Caco-2 (cell line): ENCODE measurements at regions of chr22 and their contacts with region 1.

Region 1: DNA sequence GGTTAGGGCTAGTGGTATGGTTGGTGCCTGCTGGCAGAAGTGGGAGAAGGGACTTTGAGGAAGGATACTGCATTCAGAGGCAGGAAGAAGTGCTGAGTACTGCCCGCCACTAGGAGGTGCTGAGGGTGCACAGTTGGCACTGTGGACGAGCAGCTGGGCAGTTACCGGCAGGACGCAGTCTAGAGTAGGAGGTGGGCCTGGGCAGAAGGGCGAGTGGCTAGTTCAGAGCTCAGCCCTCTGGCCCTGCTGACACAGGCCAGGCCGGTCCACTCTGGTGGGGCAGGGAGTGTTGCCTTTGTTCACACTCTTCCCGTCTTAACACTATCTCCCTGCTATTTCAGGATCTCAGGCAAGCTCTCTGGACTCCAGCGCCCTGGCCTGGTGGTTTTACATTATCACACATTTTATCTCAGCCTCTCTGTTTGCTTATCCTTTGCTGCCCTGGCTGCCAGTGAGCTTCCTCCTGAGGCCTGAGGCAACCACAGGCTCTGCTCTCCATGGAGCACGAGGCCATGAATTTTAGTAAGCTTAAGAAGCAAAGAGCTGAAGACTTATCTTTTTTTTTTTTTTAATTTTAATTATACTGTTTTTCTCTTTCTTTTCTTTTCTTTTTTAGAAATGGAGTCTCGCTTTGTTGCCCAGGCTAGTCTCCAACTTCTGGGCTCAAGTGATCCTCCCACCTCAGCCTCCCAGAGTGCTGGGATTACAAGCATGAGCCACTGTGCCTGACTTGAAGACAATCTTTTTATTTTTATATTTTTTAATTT is 26.9 kb downstream of the SNAP29 start:
- DNase-seq: peak; percentile 83 to 89
- H3K4me3 ChIP-seq: no peak overlapping the region
- H3K4me3 Mint-ChIP-seq: peak overlapping the region; percentile 63
- H3K27ac Mint-ChIP-seq: peak overlapping the region; percentile 97
- H3K4me1 ChIP-seq: peaks cover 15% of the 10 kb centered on the region; the same call in 1 of the 2 replicates
- H3K4me1 Mint-ChIP-seq: peaks cover 16% of the 10 kb centered on the region
- H3K27me3 ChIP-seq: no peaks in the 10 kb centered on the region
- H3K27me3 Mint-ChIP-seq: no peaks in the 10 kb centered on the region
- CTCF ChIP-seq: peak; percentile 89 to 94

Region 2: DNA sequence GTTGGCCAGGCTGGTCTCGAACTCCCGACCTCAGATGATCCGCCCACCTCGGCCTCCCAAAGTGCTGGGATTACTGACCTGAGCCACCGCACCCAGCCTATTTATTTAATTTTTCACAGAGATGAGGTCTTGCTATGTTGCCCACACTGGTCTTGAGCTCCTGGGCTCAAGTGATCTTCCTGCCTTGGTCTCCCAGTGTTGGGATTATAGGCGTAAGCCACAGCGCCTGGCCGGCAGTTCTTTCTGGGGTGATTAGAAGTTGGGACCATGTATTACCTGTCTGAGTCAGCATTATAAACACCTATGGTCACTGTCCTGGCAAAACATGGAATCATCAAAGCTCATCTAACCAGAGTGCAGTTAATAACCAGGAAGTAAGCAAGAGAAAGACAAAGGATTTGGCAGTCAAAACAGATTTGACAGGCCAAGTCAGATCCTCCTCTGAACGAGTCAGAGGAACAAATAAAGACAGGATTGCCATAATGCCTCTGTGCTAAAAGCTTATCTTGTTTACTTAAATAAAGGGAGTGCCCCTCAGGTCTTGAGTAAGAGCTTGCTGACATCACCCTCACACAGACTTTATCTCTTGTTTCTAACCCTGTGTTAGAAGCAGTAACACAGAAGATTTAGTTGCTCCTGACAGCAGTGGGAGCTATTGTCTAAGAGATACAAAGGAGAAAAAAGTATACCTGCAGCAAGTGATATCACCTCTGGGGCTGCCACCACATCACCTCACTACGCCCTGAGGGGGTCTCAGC is 108.1 kb before region 1 on chr22:
- CTCF ChIA-PET with region 1: interaction called, 17 read pairs
- POLR2A ChIA-PET with region 1: no interaction called
- intact Hi-C with region 1: loop called (anchors 10 kb)
- DNase-seq: peak; percentile 78 to 85
- H3K4me3 ChIP-seq: no peak overlapping the region
- H3K4me3 Mint-ChIP-seq: peak overlapping the region; percentile 56
- H3K27ac Mint-ChIP-seq: peak overlapping the region; percentile 97
- H3K4me1 ChIP-seq: peaks cover 43% of the 10 kb centered on the region
- H3K4me1 Mint-ChIP-seq: peaks cover 37% of the 10 kb centered on the region
- H3K27me3 ChIP-seq: no peaks in the 10 kb centered on the region
- H3K27me3 Mint-ChIP-seq: no peaks in the 10 kb centered on the region
- CTCF ChIP-seq: peak in 1 of 2 experiments; percentile 42

Region 3: GRCh38 chr22:20803696-20804324 is 81.9 kb before region 1 on chr22:
- CTCF ChIA-PET with region 1: interaction called, 30 read pairs
- POLR2A ChIA-PET with region 1: no interaction called
- intact Hi-C with region 1: loop called (anchors 1 kb)
- DNase-seq: peak; percentile 53 to 71
- H3K4me3 ChIP-seq: no peak overlapping the region
- H3K4me3 Mint-ChIP-seq: no peak overlapping the region
- H3K27ac Mint-ChIP-seq: peak overlapping the region; percentile 13
- H3K4me1 ChIP-seq: no peaks in the 10 kb centered on the region
- H3K4me1 Mint-ChIP-seq: no peaks in the 10 kb centered on the region
- H3K27me3 ChIP-seq: no peaks in the 10 kb centered on the region
- H3K27me3 Mint-ChIP-seq: no peaks in the 10 kb centered on the region
- CTCF ChIP-seq: peak; percentile 54 to 77

Region 4: DNA sequence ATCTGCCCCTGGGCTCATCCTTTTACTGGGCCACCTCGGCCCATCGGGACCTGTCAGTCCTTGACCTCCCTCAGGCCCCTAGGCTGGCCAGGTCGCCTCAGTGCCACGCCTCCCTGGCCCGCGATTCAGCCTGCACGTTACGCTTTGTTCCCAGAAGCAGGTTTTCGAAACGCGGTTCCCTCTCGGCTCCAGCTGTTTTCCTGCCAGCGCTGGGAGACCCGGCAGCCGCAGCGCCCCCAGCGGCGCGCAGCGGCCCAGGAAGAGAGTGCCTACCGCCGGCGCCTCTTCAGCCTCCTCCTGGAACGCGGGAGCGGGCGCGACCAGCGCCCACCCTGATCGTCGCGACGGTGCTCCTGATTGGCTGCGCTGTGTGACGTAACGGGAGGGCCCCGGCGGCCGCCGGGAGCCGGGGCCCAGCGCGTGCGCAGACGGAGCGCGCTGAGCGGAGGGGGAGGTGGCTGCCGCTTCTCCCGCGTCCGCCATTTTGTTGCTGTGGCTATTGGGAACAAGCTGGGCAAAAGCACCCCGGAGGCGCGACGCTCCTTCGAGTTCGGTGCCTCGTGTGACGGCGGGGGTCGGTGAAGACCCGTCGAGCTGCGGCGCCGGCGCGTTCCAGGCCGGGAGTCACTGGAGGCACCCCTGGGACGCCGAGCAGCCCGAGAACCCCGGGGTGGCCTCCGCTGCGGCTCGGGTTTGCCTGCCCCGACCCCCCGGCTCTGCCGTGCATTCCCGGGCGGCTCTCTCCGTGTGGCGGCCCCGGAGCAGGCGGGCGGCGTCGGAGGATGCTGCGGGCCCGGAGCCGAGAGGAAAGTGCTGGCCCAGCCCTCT is 31.5 kb after region 1 on chr22 and contains the start of gene CRKL:
- CTCF ChIA-PET with region 1: interaction called, 36 read pairs
- POLR2A ChIA-PET with region 1: no interaction called
- intact Hi-C with region 1: loop called (anchors 1 kb)
- DNase-seq: peak; percentile 96 to 97
- H3K4me3 ChIP-seq: peak within 1 kb of the TSS; percentile 87
- H3K4me3 Mint-ChIP-seq: peak within 1 kb of the TSS; percentile 82
- H3K27ac Mint-ChIP-seq: peak within 1 kb of the TSS; percentile 82
- H3K4me1 ChIP-seq: peaks cover 24% of the 10 kb centered on the region
- H3K4me1 Mint-ChIP-seq: peaks cover 33% of the 10 kb centered on the region
- H3K27me3 ChIP-seq: no peaks in the 10 kb centered on the region
- H3K27me3 Mint-ChIP-seq: no peaks in the 10 kb centered on the region
- CTCF ChIP-seq: peak; percentile 81 to 96
- total RNA-seq, gene CRKL: 76.0 and 82.7 TPM in 2 replicates

Region 5: DNA sequence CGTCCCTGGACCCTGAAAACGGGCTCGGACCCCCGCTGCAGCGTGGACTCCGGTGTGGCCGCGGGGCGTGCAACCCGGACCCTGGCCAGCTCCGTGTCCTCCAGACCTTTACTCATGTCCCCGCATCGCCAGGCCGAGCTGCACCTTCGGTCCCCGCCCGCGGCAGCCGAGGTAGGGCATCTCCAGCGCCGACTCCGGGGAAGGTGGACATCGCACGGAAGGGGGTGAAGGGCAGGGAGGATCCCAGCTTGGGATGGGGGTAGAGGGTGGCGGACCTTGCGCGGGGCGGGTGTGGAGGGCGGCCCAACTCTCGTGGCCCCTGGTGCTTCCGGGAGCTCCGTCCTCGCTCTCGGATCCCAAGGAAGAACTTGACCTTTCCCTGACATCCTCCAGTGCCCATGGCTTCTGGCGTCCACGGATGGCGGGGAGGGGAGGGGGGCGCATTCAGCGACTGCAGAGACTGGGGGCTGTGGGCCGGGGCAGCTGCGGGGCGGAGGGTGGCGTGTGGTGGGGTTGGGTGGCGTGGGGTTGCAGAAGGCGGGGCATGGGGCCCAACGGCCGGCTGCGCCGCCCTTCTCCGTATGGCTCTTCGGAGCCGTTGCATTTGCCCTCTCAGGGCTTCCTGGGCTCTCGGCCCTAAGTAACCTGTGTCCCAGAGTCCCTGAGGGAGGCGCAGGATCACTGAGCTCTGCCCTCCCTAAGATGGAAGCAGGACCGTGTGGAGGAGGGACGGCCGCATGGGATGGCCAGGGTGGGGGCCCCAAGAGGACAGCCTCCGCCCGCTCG is 71.8 kb after region 1 on chr22:
- CTCF ChIA-PET with region 1: interaction called, 21 read pairs
- POLR2A ChIA-PET with region 1: no interaction called
- intact Hi-C with region 1: loop called (anchors 5 kb)
- DNase-seq: peak; percentile 66 to 78
- H3K4me3 ChIP-seq: peak overlapping the region; percentile 77
- H3K4me3 Mint-ChIP-seq: peak overlapping the region; percentile 82
- H3K27ac Mint-ChIP-seq: peak overlapping the region; percentile 59
- H3K4me1 ChIP-seq: peaks cover 36% of the 10 kb centered on the region
- H3K4me1 Mint-ChIP-seq: no peaks in the 10 kb centered on the region
- H3K27me3 ChIP-seq: no peaks in the 10 kb centered on the region
- H3K27me3 Mint-ChIP-seq: no peaks in the 10 kb centered on the region
- CTCF ChIP-seq: no peak

Region 6: DNA sequence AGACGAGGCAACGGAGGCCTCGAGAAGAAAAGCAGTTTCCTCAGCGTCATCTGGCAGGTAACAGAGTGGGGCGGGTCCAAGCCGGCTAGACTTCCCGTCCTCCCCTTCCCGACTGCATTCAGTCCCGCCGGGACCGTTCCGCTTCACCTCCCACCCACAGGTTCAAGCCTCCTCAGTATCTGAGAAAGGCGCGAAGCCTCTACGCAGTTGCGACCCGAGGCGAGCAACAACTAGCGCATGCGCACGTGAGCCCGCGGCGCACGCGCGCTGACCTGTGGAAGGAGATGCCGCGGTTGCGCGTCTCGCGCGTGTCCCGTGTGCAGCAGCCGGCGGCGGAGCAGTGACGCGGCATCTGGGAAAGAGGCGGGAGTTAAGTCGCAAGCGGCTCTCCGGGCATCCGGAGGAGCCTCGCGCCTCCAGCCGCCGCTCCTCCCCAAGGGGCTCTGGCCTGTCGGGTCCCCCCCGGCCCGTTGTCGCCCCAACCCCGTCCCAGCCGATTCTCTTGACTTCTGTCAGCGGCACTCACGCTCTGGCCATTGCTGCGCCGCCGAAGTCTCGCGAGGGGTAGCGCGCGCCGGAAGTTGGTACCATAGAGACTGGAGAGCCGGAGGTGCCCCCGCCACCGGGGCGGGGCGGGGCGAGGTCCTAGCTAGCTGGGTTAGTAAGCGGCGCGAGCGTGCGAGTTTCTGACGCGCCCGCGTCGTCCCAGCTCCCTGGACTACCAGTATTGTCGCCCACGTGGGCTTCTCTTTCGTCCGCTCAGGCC is 116.0 kb after region 1 on chr22 and contains the start of gene THAP7:
- CTCF ChIA-PET with region 1: interaction called, 6 read pairs
- POLR2A ChIA-PET with region 1: no interaction called
- intact Hi-C with region 1: loop called (anchors 1 kb)
- DNase-seq: peak; percentile 96
- H3K4me3 ChIP-seq: peak within 1 kb of the TSS; percentile 43
- H3K4me3 Mint-ChIP-seq: peak within 1 kb of the TSS; percentile 98
- H3K27ac Mint-ChIP-seq: peak within 1 kb of the TSS; percentile 98
- H3K4me1 ChIP-seq: peaks cover 9% of the 10 kb centered on the region
- H3K4me1 Mint-ChIP-seq: peaks cover 10% of the 10 kb centered on the region
- H3K27me3 ChIP-seq: no peaks in the 10 kb centered on the region
- H3K27me3 Mint-ChIP-seq: no peaks in the 10 kb centered on the region
- CTCF ChIP-seq: no peak
- total RNA-seq, gene THAP7: 29.1 and 30.6 TPM in 2 replicates